AG04449 (cell line): ENCODE measurements at regions of chr1 and their contacts with region 1.

Region 1: GRCh38 chr1:179002552-179003345 is 22.9 kb upstream of the FAM20B start:
- DNase-seq: no peak
- H3K4me3 ChIP-seq: no peak overlapping the region
- CTCF ChIP-seq: peak; percentile 88

Region 2: GRCh38 chr1:178513278-178514022 is 489.3 kb before region 1 on chr1:
- CTCF ChIA-PET with region 1: interaction called, 10 read pairs
- POLR2A ChIA-PET with region 1: no interaction called
- DNase-seq: no peak
- H3K4me3 ChIP-seq: no peak overlapping the region
- CTCF ChIP-seq: peak; percentile 2

Region 3: DNA sequence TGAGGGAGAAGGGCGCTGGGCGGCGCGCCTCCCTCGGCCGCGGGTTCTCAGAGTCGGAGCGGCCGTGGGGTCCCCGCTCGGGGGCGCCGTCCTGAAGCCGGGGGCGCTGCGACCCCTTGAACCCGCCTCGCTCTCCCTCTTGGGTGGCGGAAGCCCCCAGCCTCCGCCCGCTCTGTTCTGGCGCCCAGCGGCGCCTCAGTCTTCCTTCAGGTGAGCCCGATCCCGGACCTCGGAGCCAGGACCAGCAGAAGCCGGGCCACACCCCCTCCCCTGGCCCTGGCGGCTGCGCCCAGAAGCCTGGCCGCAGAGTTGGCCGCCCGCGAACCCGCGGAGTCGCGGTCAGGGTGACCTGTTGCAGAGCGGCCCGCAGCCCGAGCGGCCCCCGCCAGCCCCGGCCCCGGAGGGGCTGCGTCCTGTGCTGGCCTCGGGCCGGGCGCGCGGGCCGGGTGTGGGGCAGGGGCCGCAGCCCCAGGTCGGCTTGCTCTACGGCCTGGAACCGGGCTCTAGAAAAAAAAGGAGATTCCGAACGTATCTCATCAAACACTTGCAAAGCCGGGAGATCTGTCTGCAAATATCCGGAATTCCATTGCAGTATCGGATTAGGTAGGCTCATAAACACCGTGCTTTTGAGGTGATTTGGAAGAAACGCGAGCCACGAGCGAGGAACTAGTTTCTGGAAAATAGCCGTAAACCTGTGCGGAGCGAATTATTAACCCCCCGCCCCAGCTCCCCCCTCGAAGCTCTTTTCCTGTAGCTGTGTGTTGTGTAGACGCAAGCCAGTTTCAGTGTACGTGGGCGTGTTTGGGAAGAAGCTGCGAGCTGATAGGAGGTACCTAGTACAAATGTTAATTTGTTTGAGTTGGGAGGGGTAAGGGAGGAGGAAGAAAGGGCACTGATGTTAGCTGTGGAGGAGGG is 276.9 kb before region 1 on chr1:
- CTCF ChIA-PET with region 1: interaction called, 10 read pairs
- POLR2A ChIA-PET with region 1: no interaction called
- DNase-seq: peak; percentile 45
- H3K4me3 ChIP-seq: peak overlapping the region; percentile 76
- CTCF ChIP-seq: no peak

Region 4: GRCh38 chr1:178774263-178774662 is 228.5 kb before region 1 on chr1:
- CTCF ChIA-PET with region 1: interaction called, 101 read pairs
- POLR2A ChIA-PET with region 1: no interaction called
- DNase-seq: no peak
- H3K4me3 ChIP-seq: no peak overlapping the region
- CTCF ChIP-seq: no peak

Region 5: DNA sequence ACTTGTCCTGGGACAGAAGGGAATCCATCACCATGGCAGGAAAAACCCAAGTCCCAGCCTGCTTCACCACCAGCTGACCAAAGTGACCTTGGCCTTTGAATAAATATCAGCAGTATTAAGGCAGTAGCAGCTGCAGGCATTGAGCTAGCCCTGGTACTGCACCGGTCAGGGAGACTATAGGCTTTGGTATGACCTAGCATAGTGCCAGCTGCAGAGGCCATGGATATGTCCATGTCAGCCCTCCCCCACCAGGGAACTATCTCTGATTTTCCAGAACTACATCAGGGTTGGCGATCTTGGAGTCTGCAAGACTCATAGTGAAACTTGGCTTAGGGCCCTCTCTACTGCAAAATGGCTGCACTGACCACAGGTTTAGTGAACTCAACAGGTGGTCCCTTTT is 26.2 kb before region 1 on chr1:
- CTCF ChIA-PET with region 1: interaction called, 26 read pairs
- POLR2A ChIA-PET with region 1: no interaction called
- DNase-seq: no peak
- H3K4me3 ChIP-seq: no peak overlapping the region
- CTCF ChIP-seq: no peak

Region 6: DNA sequence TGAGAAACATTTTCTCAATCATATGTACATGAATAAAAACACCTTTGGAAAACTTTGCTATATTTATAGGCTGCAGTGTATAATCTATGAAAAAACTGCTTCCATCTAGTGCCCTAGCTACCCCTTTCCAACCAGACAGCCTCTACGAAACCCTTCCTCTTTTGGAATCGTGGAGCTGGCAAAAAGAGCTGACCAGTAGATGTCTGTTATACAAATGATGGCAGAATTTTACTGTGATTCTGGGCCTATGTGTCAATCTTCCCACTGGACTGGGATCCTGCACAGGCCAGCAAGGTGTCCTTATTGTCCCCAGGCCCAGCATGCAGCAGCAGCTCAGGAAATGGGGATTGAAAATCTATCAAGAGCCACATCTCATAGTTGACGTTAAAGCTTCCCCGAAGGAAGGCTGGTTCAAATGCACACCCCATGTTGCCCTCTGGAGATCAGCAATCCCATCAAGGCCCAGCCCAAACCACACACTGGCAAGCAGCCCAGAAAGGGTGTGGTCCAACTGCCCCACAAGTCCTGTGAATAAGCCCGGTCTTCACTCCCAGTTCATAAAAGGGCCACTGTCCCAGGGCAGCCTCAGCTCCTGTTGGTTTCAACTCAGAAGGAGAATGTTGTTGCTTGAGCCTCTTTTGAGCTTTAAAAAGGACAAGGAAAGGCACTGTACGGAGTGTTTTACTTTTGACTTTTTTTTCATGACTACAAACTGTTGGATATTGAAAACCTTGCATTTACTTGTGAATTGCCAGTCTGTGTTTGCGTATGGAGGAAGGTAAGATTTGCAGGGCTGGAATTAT is 14.2 kb after region 1 on chr1:
- CTCF ChIA-PET with region 1: interaction called, 36 read pairs
- POLR2A ChIA-PET with region 1: no interaction called
- DNase-seq: peak; percentile 71
- H3K4me3 ChIP-seq: no peak overlapping the region
- CTCF ChIP-seq: no peak